Aorta (tissue), 5 donors: ENCODE measurements at regions of chr12 and their contacts with region 1.

Region 1: GRCh38 chr12:121626087-121626852 is at the start of gene ORAI1:
- DNase-seq: peak; percentile 98 to 99
- ATAC-seq: peak; percentile 94
- H3K4me3 ChIP-seq: peak within 1 kb of the TSS; percentile 21 to 49
- H3K27ac ChIP-seq: peak within 1 kb of the TSS in 1 of 2 donors; percentile 72
- H3K4me1 ChIP-seq: no peaks in the 10 kb centered on the region
- H3K27me3 ChIP-seq: no peaks in the 10 kb centered on the region
- total RNA-seq, gene ORAI1: 11.0 to 12.5 TPM

Region 2: GRCh38 chr12:121550974-121551634 is 75.2 kb before region 1 on chr12:
- intact Hi-C with region 1: loop called in 1 of 2 experiments (anchors 5 kb)
- DNase-seq: no peak
- ATAC-seq: no peak
- H3K4me3 ChIP-seq: no peak overlapping the region
- H3K27ac ChIP-seq: no peak overlapping the region
- H3K4me1 ChIP-seq: no peaks in the 10 kb centered on the region
- H3K27me3 ChIP-seq: no peaks in the 10 kb centered on the region

Region 3: DNA sequence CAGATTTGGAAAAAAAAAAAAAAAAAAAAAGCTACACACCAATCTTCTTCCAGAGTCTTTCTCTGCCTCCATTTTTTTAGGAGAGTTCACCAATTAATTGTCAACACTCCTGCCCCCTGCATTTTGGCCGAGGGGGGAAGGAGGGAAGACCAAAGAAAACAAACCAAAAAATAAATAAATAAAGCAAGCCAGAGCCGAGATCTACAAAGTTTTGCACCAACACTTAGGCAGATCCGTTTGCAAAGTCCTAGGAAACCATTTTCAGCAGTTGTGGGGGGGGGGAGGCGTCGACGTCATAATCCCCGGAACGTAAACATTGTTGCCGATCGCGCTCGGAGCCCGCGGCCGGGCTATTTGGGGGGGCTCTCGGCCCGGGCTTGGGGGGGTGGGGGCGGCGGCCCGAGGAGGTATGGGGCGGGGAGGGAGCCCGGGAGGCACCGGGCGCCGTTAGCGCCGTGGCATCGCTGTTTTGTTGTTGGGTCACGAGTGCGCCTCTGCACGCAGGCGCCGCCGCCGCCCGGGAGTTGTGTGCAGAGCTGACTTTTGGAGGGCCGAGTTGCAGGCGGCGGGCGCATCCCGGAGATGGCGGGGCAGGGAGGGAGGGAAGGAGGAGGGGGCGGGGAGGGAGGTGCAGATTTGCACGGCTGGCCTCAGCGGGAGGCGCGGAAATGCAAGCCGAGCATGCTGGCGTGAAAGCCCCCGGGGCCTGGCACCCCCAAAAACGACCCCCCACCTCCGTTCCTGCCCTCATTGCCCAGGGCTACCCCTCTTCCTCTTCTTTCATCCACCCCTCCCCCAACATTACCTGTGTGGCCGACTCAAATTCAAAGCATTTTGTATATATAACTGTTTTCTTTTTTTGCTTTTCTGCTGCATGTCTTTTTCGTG is 46.0 kb before region 1 on chr12:
- intact Hi-C with region 1: loop called (anchors 2 to 5 kb)
- DNase-seq: peak; percentile 87 to 90
- ATAC-seq: peak; percentile 69
- H3K4me3 ChIP-seq: peak overlapping the region; percentile 89 to 95
- H3K27ac ChIP-seq: peak overlapping the region in 1 of 2 donors; percentile 80
- H3K4me1 ChIP-seq: peaks cover 0 to 6% of the 10 kb centered on the region in 2 donors
- H3K27me3 ChIP-seq: no peaks in the 10 kb centered on the region

Region 4: DNA sequence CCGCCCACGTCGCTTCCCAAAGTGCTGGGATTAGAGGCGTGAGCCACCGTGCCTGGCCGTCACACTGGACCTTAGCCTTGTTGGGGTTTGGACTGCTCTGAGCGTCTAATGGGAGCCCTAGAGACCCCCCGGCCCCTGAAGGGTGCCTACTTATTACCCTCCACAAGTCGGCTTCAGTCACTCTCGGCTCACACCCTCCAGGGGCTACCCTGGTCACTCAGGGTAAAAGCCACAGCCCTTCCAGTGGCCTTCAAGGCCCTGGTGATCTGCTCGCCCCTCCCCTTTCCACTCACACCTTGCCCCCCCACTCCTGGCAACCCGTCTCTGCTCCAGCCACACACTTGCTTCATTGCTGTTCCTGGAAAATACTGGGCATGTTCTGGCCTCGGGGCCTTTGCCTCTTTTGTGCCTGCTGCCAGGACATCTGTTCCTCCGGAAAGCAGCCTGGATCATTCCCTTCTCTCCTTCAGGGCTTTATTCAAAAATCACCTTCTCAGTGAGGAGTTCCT is 46.8 kb after region 1 on chr12:
- intact Hi-C with region 1: loop called in 1 of 2 experiments (anchors 5 kb)
- DNase-seq: no peak
- ATAC-seq: peak; percentile 58
- H3K4me3 ChIP-seq: no peak overlapping the region
- H3K27ac ChIP-seq: no peak overlapping the region
- H3K4me1 ChIP-seq: no peaks in the 10 kb centered on the region
- H3K27me3 ChIP-seq: no peaks in the 10 kb centered on the region